ENCODE measurements at regions of chr7 and their contacts with region 1.

Region 1: GRCh38 chr7:35707422-35707821 is 12.5 kb upstream of the HERPUD2 start:
- DNase-seq: no peak
- CTCF ChIP-seq: no peak

Region 2: GRCh38 chr7:35906191-35906908 is 198.9 kb after region 1 on chr7:
- in situ Hi-C with region 1: loop called (anchors 5 kb)
- DNase-seq: peak; percentile 43
- CTCF ChIP-seq: peak; percentile 82

Measured in GM13976 (cell line).